ENCODE measurements at regions of chr9 and their contacts with region 1.

Region 1: DNA sequence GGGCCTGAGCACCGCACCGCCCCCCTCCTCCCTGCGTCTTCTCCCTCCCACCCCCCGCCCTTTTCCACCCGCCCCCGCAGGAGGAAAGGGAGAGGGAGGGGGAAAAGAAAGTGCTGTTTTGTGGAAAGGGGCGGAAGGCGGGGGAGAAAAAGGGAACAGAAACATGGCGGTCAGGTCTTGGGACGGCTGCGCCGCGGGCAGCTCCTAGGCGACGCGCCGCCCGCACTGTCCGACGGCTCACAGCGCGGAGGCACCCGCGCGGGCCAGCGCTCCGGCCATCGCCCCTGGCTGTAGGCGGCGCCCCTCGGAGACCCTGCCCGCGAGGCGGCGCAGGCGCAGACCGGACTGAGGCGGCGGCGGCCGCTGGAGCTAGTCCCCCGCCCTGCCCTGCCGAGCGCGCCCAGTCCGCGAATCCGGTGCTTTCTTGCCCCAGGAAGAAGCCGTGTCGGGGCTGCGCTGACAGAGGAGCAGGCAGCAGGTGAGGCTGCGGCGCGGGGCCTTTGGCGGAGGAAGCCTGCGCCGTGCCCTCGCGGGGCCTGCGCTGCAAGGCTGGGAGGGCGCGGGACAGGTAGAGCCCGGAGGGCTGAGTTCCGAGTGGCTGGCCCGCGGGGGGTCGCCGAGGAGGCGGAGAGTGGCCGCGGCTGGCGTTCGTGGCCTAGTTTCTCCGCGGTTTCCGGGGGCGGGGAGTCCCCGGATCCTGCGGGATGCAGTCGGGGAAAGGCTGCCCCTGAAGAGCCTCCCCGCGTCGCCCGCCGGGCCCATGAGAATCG is at the start of gene DENND4C:
- DNase-seq: peak; percentile 60 to 86 (median 81)
- ATAC-seq: peak; percentile 84
- H3K4me3 ChIP-seq: peak within 1 kb of the TSS; percentile 61
- H3K4me3 Mint-ChIP-seq: peak within 1 kb of the TSS in 3 of 10 donors; percentile 81 to 84 (median 84)
- H3K27ac ChIP-seq: peak within 1 kb of the TSS; percentile 81
- H3K27ac Mint-ChIP-seq: peak within 1 kb of the TSS in 6 of 9 donors; percentile 65 to 94 (median 88)
- H3K4me1 ChIP-seq: peaks cover 11 to 22% of the 10 kb centered on the region in 2 donors
- H3K4me1 Mint-ChIP-seq: peaks cover 0 to 24% (median 20%) of the 10 kb centered on the region in 7 donors
- H3K27me3 ChIP-seq: no peaks in the 10 kb centered on the region
- H3K27me3 Mint-ChIP-seq: no peaks in the 10 kb centered on the region
- total RNA-seq, gene DENND4C: 43.5 to 77.5 (median 52.0) TPM

Region 2: GRCh38 chr9:19102631-19103345 is 127.8 kb before region 1 on chr9 and contains the start of gene HAUS6:
- CTCF ChIA-PET with region 1: no interaction called
- POLR2A ChIA-PET with region 1: interaction called, 4 read pairs
- intact Hi-C with region 1: loop called (anchors 1 kb)
- DNase-seq: peak; percentile 79 to 97 (median 95)
- ATAC-seq: peak; percentile 98
- H3K4me3 ChIP-seq: peak within 1 kb of the TSS; percentile 62
- H3K4me3 Mint-ChIP-seq: peak within 1 kb of the TSS; percentile 90 to 98 (median 94)
- H3K27ac ChIP-seq: peak within 1 kb of the TSS; percentile 86
- H3K27ac Mint-ChIP-seq: peak within 1 kb of the TSS; percentile 88 to 99 (median 96)
- H3K4me1 ChIP-seq: peaks cover 4 to 9% of the 10 kb centered on the region in 2 donors
- H3K4me1 Mint-ChIP-seq: peaks cover 13 to 43% (median 25%) of the 10 kb centered on the region in 7 donors
- H3K27me3 ChIP-seq: no peaks in the 10 kb centered on the region
- H3K27me3 Mint-ChIP-seq: no peaks in the 10 kb centered on the region
- total RNA-seq, gene HAUS6: 11.4 to 25.4 (median 19.6) TPM

Region 3: GRCh38 chr9:19174127-19174912 is 56.2 kb before region 1 on chr9:
- CTCF ChIA-PET with region 1: interaction called, 6 read pairs
- POLR2A ChIA-PET with region 1: interaction called, 3 read pairs
- intact Hi-C with region 1: loop called in 1 of 2 experiments (anchors 2 kb)
- DNase-seq: peak; percentile 11 to 51 (median 37)
- ATAC-seq: peak; percentile 91
- H3K4me3 ChIP-seq: no peak overlapping the region
- H3K4me3 Mint-ChIP-seq: peak overlapping the region in 3 of 10 donors; percentile 14 to 70 (median 63)
- H3K27ac ChIP-seq: no peak overlapping the region
- H3K27ac Mint-ChIP-seq: peak overlapping the region in 5 of 9 donors; percentile 52 to 84 (median 62)
- H3K4me1 ChIP-seq: peaks cover 5 to 16% of the 10 kb centered on the region in 2 donors
- H3K4me1 Mint-ChIP-seq: peaks cover 25 to 39% (median 31%) of the 10 kb centered on the region in 7 donors
- H3K27me3 ChIP-seq: no peaks in the 10 kb centered on the region
- H3K27me3 Mint-ChIP-seq: no peaks in the 10 kb centered on the region

Region 4: DNA sequence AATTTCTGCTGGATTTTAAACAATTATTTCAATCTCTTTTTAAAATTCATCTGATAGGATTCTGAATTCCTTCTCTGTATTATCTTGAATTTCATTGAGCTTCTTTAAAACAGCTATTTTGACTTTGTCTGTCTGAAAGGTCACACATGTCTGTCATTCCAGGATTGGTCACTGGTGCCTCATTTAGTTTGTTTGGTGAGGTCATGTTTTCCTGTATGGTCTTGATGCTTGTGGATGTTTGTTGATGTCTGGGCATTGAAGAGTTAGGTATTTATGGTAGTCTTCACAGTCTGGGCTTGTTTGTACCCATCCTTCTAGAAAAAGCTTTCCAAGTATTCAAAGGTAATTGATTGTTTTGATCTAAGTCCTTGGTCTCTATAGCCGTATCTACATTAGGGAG is 39.0 kb after region 1 on chr9:
- CTCF ChIA-PET with region 1: no interaction called
- POLR2A ChIA-PET with region 1: no interaction called
- intact Hi-C with region 1: loop called in 1 of 2 experiments (anchors 5 kb)
- DNase-seq: no peak
- ATAC-seq: no peak
- H3K4me3 ChIP-seq: no peak overlapping the region
- H3K4me3 Mint-ChIP-seq: no peak overlapping the region
- H3K27ac ChIP-seq: no peak overlapping the region
- H3K27ac Mint-ChIP-seq: no peak overlapping the region
- H3K4me1 ChIP-seq: no peaks in the 10 kb centered on the region
- H3K4me1 Mint-ChIP-seq: peaks cover 30 to 64% (median 59%) of the 10 kb centered on the region in 7 donors
- H3K27me3 ChIP-seq: no peaks in the 10 kb centered on the region
- H3K27me3 Mint-ChIP-seq: no peaks in the 10 kb centered on the region

Region 5: GRCh38 chr9:19379697-19380046 is 149.1 kb after region 1 on chr9:
- CTCF ChIA-PET with region 1: no interaction called
- POLR2A ChIA-PET with region 1: interaction called, 14 read pairs
- intact Hi-C with region 1: loop called (anchors 1 kb)
- DNase-seq: peak in 1 of 9 donors; percentile 39
- ATAC-seq: peak; percentile 59
- H3K4me3 ChIP-seq: peak overlapping the region; percentile 89
- H3K4me3 Mint-ChIP-seq: peak overlapping the region; percentile 92 to 99 (median 98)
- H3K27ac ChIP-seq: peak overlapping the region; percentile 84
- H3K27ac Mint-ChIP-seq: peak overlapping the region; percentile 97 to 100 (median 99)
- H3K4me1 ChIP-seq: peaks cover 13 to 24% of the 10 kb centered on the region in 2 donors
- H3K4me1 Mint-ChIP-seq: peaks cover 29 to 50% (median 41%) of the 10 kb centered on the region in 7 donors
- H3K27me3 ChIP-seq: no peaks in the 10 kb centered on the region
- H3K27me3 Mint-ChIP-seq: no peaks in the 10 kb centered on the region

Region 6: GRCh38 chr9:19464764-19465585 is 234.4 kb after region 1 on chr9:
- CTCF ChIA-PET with region 1: interaction called, 3 read pairs
- POLR2A ChIA-PET with region 1: no interaction called
- intact Hi-C with region 1: loop called in 1 of 2 experiments (anchors 2 kb)
- DNase-seq: peak; percentile 48 to 82 (median 73)
- ATAC-seq: peak; percentile 94
- H3K4me3 ChIP-seq: peak overlapping the region; percentile 24
- H3K4me3 Mint-ChIP-seq: peak overlapping the region; percentile 71 to 97 (median 91)
- H3K27ac ChIP-seq: no peak overlapping the region
- H3K27ac Mint-ChIP-seq: peak overlapping the region in 6 of 9 donors; percentile 28 to 87 (median 70)
- H3K4me1 ChIP-seq: peaks cover 0 to 3% of the 10 kb centered on the region in 2 donors
- H3K4me1 Mint-ChIP-seq: peaks cover 4 to 17% (median 8%) of the 10 kb centered on the region in 7 donors
- H3K27me3 ChIP-seq: no peaks in the 10 kb centered on the region
- H3K27me3 Mint-ChIP-seq: peaks cover 0 to 4% (median 0%) of the 10 kb centered on the region in 5 donors

Measured in naive thymus-derived CD4-positive, alpha-beta T cell (primary cell).